Heart right ventricle (tissue), 16 donors: ENCODE measurements at regions of chr12 and their contacts with region 1.

Region 1: GRCh38 chr12:104201238-104202001 is 14.2 kb upstream of the TXNRD1 start:
- DNase-seq: peak in 1 of 2 donors; percentile 47
- ATAC-seq: peak; percentile 59 to 87 (median 76)
- H3K4me3 ChIP-seq: no peak overlapping the region
- H3K27ac ChIP-seq: no peak overlapping the region
- H3K4me1 ChIP-seq: no peaks in the 10 kb centered on the region
- H3K27me3 ChIP-seq: no peaks in the 10 kb centered on the region
- CTCF ChIP-seq: peak; percentile 60 to 89 (median 85)

Region 2: DNA sequence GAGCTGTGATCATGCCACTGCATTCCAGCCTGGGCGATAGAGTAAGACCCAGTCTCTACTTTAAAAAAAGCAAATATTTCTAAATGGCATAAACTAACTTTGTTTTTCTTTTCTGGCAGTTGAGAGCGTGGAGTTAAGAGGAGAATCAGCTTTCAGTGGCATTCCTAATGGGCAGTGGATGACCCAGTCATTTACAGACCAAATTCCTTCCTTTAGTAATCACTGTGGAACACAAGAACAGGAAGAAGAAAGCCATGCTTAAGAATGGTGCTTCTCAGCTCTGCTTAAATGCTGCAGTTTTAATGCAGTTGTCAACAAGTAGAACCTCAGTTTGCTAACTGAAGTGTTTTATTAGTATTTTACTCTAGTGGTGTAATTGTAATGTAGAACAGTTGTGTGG is 214.6 kb before region 1 on chr12:
- intact Hi-C with region 1: no loop called
- DNase-seq: no peak
- ATAC-seq: no peak
- H3K4me3 ChIP-seq: no peak overlapping the region
- H3K27ac ChIP-seq: no peak overlapping the region
- H3K4me1 ChIP-seq: no peaks in the 10 kb centered on the region
- H3K27me3 ChIP-seq: no peaks in the 10 kb centered on the region
- CTCF ChIP-seq: no peak

Region 3: DNA sequence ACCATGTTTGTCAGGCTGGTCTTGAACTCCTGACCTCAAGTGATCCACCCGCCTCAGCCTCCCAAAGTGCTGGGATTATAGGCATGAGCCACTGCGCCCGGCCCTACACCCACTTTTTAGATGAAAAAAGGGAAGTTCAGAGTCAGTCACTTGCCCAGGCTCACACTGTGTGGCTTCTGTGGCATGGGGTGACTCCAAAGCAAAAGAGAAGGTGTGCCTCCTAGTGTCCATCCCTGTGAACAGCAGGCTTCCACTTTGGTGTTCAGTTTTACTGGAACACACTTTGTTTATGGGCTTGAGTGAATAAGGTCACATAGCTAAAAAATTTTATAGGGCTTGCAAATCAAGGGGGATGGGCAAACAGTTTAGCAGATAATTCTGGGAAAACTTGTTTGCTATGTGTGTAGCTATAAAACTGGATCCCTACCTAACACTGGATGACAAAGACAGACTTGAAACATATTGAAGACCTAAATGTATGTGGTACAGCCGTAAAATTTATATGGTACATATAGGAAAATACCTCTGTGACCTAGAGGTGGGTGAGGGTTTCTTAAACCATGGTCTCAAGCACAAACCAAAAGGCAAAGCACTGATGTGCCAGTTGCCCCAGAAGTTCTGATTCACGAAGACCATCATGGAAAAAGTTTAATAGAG is 157.1 kb after region 1 on chr12:
- intact Hi-C with region 1: loop called in 9 of 10 experiments (anchors 1 to 5 kb)
- DNase-seq: peak; percentile 35 to 51
- ATAC-seq: peak; percentile 70 to 80 (median 78)
- H3K4me3 ChIP-seq: no peak overlapping the region
- H3K27ac ChIP-seq: no peak overlapping the region
- H3K4me1 ChIP-seq: peaks cover 0 to 10% (median 0%) of the 10 kb centered on the region in 9 donors
- H3K27me3 ChIP-seq: no peaks in the 10 kb centered on the region
- CTCF ChIP-seq: peak; percentile 61 to 89 (median 87)